ENCODE measurements at regions of chr1 and their contacts with region 1.

Region 1: DNA sequence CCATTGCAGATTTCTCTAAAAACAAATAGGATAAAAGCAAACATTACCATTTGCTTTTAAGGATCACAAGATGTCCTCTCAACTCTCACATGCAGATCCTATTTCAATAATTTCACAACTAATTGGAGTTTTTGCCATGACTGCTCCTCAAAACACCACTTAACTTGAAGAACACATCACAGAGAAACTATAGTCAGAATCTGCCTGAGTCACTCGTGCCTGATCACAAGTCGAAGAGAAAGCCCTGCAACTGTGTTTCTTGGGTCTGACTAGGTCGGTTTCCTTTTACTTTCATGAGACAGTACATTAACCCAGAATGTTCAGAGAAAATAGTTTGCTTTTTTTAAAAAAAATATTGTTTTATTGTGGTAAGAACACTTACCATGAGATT is 46.3 kb upstream of the SMYD2 start:
- DNase-seq: no peak
- ATAC-seq: no peak
- H3K4me3 ChIP-seq: no peak overlapping the region
- H3K27ac ChIP-seq: no peak overlapping the region
- H3K4me1 ChIP-seq: no peaks in the 10 kb centered on the region
- H3K27me3 ChIP-seq: no peaks in the 10 kb centered on the region; a peak in 1 of 4 replicates
- CTCF ChIP-seq: no peak
- EP300 ChIP-seq: no peak
- POLR2A ChIP-seq: no peak
- RAD21 ChIP-seq: no peak

Region 2: DNA sequence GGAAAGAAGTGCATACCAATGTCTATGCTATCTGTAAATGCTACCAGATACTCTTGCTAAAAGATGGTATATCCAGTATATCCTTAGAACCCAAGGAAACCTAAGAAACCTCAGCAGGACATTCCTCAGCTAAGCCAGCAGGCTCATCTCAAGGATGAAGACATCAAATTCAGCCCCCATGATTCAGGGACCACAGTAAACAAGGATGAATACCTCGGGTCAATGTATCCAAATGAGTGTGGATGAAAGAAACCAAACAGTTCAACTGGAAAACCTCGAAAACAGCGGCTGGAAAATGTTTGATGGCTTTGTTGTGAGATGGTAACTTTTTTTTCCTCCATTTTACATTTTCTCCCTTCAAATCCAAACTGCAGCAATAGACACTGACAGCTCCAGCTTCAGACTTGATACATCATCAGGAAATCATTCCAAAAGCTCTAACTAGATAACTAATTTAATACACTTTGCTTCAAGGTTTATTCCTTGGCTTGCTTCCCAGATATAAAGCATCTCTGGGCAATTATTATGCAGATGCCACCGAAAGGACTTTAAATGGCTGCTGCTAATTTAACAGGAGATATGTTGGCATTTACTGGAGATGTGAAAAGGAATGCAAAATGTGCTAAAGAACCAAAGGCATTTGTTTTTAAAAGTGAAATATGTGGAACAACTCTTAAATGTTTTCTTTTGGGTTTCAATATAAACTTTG is 120.0 kb after region 1 on chr1:
- CTCF ChIA-PET with region 1: no interaction called
- POLR2A ChIA-PET with region 1: no interaction called
- RAD21 ChIA-PET with region 1: no interaction called
- SMC1A ChIA-PET with region 1: no interaction called
- in situ Hi-C with region 1: no loop called
- intact Hi-C with region 1: no loop called
- DNase-seq: no peak
- ATAC-seq: no peak
- H3K4me3 ChIP-seq: no peak overlapping the region
- H3K27ac ChIP-seq: no peak overlapping the region
- H3K4me1 ChIP-seq: no peaks in the 10 kb centered on the region
- H3K27me3 ChIP-seq: peaks cover 0 to 2% of the 10 kb centered on the region in 2 experiments; a peak in 1 of 4 replicates
- CTCF ChIP-seq: no peak
- EP300 ChIP-seq: no peak
- POLR2A ChIP-seq: no peak
- RAD21 ChIP-seq: no peak

Region 3: DNA sequence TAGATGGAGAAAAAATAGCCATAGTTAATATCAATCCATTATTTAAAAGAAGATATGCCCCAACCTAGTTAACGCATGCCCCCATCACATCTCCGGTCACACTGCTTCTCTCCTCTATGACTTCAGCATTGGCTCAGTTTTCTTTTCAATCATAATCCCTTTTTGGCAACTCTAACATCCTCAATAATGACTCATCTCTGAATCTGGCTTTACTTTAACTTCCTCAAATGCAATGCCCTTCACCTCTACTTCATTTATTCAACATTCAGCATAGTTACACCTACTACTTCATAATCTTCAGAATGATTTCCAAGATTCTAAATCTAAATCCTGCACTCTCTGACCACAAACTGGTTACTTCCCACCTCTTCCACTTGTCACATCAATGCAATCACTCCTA is 1771.3 kb after region 1 on chr1:
- CTCF ChIA-PET with region 1: no interaction called
- POLR2A ChIA-PET with region 1: no interaction called
- RAD21 ChIA-PET with region 1: no interaction called
- SMC1A ChIA-PET with region 1: no interaction called
- in situ Hi-C with region 1: no loop called
- intact Hi-C with region 1: loop called (anchors 10 kb)
- DNase-seq: peak; percentile 53
- ATAC-seq: peak; percentile 97
- H3K4me3 ChIP-seq: no peak overlapping the region
- H3K27ac ChIP-seq: no peak overlapping the region
- H3K4me1 ChIP-seq: no peaks in the 10 kb centered on the region
- H3K27me3 ChIP-seq: no peaks in the 10 kb centered on the region
- CTCF ChIP-seq: no peak
- EP300 ChIP-seq: peak in 1 of 2 experiments; percentile 89; a peak in 2 of 4 replicates
- POLR2A ChIP-seq: no peak
- RAD21 ChIP-seq: no peak